MCF 10A (cell line): ENCODE measurements at regions of chr7 and their contacts with region 1.

Region 1: DNA sequence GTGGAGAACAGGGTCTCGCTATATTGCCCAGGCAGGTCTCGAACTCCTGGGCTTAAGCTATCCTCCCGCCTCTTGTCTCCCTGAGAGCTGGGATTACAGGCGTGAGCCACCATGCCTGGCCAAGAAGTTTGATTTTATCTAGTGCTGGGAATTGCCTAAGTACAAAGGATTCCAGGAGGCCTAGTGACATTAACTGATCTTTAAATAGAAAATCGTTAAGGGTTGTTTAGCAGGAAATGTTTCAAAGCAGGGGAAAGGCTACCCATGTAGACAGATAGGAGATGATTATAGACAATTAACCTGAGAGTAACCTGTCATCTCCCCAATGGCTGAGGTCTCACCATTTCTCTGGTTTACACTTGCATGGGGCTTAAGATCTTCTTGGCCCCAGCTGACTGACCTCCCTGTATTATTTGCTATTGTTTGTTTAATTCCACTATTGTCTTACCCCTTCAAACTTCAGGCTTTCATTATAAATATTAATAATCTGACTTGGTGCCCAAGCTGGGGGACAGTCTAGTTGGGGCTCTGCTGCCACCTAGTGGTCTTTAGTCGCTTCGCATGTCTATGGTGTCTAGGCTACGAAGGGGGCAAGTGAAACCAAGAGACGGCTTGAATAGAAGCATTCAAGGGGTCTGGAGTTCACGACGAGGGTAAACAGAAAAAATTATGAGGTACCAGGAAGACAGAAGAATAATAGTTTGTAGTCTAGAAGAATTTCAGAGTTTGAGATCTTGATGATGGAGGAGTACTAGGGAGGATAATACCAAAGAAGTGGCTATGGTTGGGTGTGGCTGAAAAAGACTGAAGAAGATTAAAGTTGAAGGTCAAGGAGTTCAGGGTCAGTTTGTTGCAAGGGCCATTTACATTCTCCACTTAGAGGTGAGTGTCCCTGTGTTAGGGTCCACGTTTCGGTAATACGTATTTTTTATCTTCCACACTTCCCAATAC is 40.4 kb upstream of the BPGM start:
- DNase-seq: peak; percentile 73
- H3K4me3 Mint-ChIP-seq: peak overlapping the region; percentile 21
- H3K27ac Mint-ChIP-seq: peak overlapping the region; percentile 65
- H3K4me1 Mint-ChIP-seq: peaks cover 6% of the 10 kb centered on the region
- H3K27me3 Mint-ChIP-seq: no peaks in the 10 kb centered on the region
- CTCF ChIP-seq: peak; percentile 90

Region 2: DNA sequence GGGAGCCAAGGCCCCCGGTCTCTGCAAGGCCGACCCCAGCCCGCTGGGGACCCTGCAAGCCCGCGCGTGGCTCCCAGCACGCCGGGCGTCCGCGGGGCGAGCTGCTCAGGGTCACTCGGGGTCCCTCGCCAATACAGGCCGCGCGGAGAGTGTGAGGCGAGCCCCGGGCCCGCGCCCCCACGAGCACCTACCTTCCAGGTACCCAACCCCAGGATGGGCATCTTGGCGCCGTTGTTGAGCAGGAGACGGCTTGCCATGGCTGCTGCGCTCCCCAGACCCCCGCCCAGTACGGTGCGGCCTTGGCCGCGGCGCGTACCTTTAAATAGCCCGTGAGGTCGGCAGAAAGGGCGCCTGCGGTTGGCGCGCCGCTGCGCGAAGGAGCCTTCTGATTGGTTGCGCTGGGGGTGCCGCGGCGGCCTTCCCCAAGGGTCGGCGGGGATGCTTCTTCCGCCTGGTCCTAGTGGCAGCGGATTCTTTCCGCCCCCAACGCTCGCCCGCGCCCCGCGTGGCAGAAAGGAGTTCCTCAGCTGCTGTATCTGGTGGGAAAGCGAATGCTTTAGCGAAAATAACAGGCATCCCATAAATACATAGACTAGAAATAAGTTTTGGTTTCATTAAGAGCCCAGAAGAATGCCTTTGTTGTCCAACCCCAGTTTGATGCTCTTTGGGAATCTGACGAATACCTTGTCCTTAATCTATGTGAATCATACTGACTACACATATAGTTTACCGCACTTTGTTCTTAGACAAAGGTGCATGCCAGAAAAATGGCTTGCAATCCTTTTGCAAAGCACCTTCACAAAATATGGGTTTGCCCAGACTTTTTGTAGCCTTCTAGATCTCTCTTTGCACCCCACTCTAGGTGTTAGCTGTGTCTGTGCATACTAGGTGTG is 147.2 kb before region 1 on chr7 and contains the start of gene AKR1B1:
- CTCF ChIA-PET with region 1: interaction called, 11 read pairs
- POLR2A ChIA-PET with region 1: interaction called, 4 read pairs
- intact Hi-C with region 1: no loop called
- DNase-seq: peak; percentile 86
- H3K4me3 Mint-ChIP-seq: peak within 1 kb of the TSS; percentile 76
- H3K27ac Mint-ChIP-seq: peak within 1 kb of the TSS; percentile 61
- H3K4me1 Mint-ChIP-seq: peaks cover 29% of the 10 kb centered on the region
- H3K27me3 Mint-ChIP-seq: no peaks in the 10 kb centered on the region
- CTCF ChIP-seq: peak; percentile 18
- total RNA-seq, gene AKR1B1: 115 and 128 TPM in 2 replicates

Region 3: GRCh38 chr7:134520130-134520529 is 86.1 kb before region 1 on chr7:
- CTCF ChIA-PET with region 1: interaction called, 146 read pairs
- POLR2A ChIA-PET with region 1: interaction called, 4 read pairs
- intact Hi-C with region 1: loop called (anchors 1 kb)
- DNase-seq: peak; percentile 23
- H3K4me3 Mint-ChIP-seq: no peak overlapping the region
- H3K27ac Mint-ChIP-seq: no peak overlapping the region
- H3K4me1 Mint-ChIP-seq: peaks cover 26% of the 10 kb centered on the region
- H3K27me3 Mint-ChIP-seq: no peaks in the 10 kb centered on the region
- CTCF ChIP-seq: no peak

Region 4: GRCh38 chr7:134553976-134554375 is 52.3 kb before region 1 on chr7:
- CTCF ChIA-PET with region 1: interaction called, 45 read pairs
- POLR2A ChIA-PET with region 1: no interaction called
- intact Hi-C with region 1: loop called (anchors 1 kb)
- DNase-seq: peak; percentile 45
- H3K4me3 Mint-ChIP-seq: no peak overlapping the region
- H3K27ac Mint-ChIP-seq: no peak overlapping the region
- H3K4me1 Mint-ChIP-seq: peaks cover 3% of the 10 kb centered on the region
- H3K27me3 Mint-ChIP-seq: no peaks in the 10 kb centered on the region
- CTCF ChIP-seq: no peak

Region 5: DNA sequence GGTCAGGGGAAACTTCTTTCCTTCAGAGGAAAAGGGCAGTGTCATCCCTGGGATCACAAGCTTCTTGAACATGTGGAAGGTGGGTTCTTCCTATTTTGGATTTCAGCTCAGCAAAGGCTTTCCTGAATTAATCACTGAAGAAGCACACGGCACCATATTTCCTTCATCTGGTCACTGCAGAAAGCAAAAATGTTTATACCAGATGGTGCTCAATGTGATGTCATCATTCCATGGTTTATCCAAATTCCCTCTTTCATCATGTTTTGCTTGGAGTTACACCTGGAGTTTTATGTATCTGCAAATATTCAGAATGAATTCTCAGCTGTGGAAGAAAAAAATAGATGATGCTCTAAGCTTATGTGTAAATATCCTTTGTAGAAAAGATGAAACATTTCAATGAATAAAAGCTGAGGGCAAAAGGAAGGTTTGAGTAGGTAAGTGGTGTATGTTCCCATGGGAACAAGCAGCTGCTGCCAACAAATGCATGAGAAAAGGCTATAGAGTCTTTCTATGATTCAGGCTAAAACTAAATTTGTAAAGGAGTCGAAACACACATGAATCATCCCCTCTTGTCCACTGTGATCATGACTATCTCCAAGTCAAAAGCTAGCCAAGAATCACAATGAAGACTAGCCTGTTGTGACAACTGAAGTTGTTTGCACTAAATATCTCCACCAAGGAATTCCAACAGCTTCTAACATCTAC is 13.5 kb after region 1 on chr7:
- CTCF ChIA-PET with region 1: interaction called, 30 read pairs
- POLR2A ChIA-PET with region 1: interaction called, 4 read pairs
- intact Hi-C with region 1: no loop called
- DNase-seq: peak; percentile 92
- H3K4me3 Mint-ChIP-seq: no peak overlapping the region
- H3K27ac Mint-ChIP-seq: peak overlapping the region; percentile 94
- H3K4me1 Mint-ChIP-seq: peaks cover 58% of the 10 kb centered on the region
- H3K27me3 Mint-ChIP-seq: no peaks in the 10 kb centered on the region
- CTCF ChIP-seq: no peak

Region 6: DNA sequence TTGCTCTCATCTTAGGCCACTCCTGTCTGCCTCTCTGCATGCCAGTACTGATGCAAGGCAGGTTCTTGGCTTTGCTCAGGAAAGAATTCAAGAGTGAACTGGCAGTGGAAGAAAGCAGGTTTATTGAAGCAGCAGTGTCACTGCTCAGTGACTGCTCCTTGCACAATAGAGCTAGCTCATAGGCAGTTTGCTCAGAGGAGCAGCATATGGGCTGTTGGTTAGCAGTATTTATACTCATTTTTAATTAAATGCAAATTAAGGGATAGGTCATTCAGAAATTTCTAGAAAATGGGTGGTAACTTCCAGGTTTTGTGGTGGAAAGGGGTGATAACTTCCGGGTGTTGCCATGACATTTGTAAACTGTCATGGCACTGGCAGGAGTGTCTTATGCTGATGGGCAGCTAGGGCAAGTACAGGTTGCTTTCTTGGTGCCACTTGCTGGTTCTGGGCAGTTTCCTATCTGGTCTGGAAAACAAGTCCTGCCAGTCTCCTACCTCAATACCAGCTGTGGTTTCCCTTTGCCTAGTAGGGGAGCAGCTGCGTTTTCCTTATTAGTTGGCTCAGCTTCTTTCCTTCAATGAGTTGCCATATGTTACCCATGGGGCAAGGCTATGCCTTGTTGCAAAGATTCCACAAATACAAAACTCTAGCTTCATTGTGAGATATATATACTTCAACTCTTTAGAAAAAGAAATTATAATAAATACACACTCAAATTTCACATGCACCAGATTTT is 108.4 kb after region 1 on chr7:
- CTCF ChIA-PET with region 1: no interaction called
- POLR2A ChIA-PET with region 1: no interaction called
- intact Hi-C with region 1: no loop called
- DNase-seq: no peak
- H3K4me3 Mint-ChIP-seq: no peak overlapping the region
- H3K27ac Mint-ChIP-seq: no peak overlapping the region
- H3K4me1 Mint-ChIP-seq: no peaks in the 10 kb centered on the region
- H3K27me3 Mint-ChIP-seq: no peaks in the 10 kb centered on the region
- CTCF ChIP-seq: no peak